Head of caudate nucleus (tissue), 42 donors: ENCODE measurements at regions of chr2 and their contacts with region 1.

Region 1: DNA sequence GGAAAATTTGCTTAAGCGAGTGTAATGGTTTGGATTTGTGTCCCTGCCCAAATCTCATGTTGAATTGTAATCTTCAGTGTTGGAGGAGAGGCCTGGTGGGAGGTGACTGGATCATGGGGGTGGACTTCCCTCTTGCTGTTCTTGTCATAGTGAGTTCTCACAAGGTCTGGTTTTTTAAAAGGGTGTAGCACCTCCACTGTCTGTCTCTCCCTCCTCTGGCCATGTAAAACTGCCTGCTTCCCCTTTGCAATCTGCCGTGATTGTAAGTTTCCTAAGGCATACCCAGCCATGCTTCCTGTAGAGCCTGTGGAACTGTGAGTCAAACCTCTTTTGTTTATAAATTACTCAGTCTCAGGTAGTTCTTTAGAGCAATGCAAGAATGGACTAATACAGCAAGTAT is 6.6 kb downstream of the YIPF4 start:
- DNase-seq: no peak

Region 2: DNA sequence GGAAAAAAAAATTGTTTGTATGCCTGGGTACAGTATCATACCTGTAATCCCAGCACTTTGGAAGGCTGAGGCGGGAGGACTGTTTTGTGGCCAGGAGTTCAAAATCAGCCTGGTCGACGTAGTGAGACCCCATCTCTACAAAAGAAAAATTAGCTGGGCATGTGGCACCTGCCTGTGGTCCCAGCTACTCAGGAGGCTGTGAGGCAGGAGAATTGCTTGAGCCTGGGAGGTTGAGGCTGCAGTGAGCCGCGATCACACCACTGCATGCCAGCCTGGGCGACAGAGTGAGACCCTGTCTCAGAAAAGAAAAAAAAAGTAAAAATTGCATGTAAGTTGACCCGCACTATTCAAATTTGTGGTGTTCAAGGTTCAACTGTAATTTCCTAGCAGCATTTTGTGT is 26.3 kb after region 1 on chr2:
- intact Hi-C with region 1: loop called (anchors 2 kb)
- DNase-seq: no peak

Region 3: GRCh38 chr2:32464431-32464830 is 180.1 kb after region 1 on chr2:
- intact Hi-C with region 1: no loop called
- DNase-seq: peak in 4 of 42 donors; percentile 4 to 20 (median 12)